PC-9 (cell line): ENCODE measurements at regions of chr12 and their contacts with region 1.

Region 1: GRCh38 chr12:110312581-110313360 is 31.7 kb downstream of the ATP2A2 start:
- DNase-seq: peak in 1 of 2 experiments; percentile 72
- H3K4me3 ChIP-seq: no peak overlapping the region
- H3K27ac ChIP-seq: peak overlapping the region; percentile 71
- H3K4me1 ChIP-seq: peaks cover 18% of the 10 kb centered on the region
- H3K27me3 ChIP-seq: no peaks in the 10 kb centered on the region
- CTCF ChIP-seq: no peak

Region 2: GRCh38 chr12:110224379-110225304 is 88.1 kb before region 1 on chr12:
- CTCF ChIA-PET with region 1: no interaction called
- POLR2A ChIA-PET with region 1: interaction called, 27 read pairs
- intact Hi-C with region 1: no loop called
- DNase-seq: peak in 1 of 2 experiments; percentile 64
- H3K4me3 ChIP-seq: peak overlapping the region; percentile 10; the same call in 1 of the 2 replicates
- H3K27ac ChIP-seq: peak overlapping the region; percentile 79
- H3K4me1 ChIP-seq: peaks cover 34% of the 10 kb centered on the region
- H3K27me3 ChIP-seq: no peaks in the 10 kb centered on the region
- CTCF ChIP-seq: peak; percentile 46

Region 3: DNA sequence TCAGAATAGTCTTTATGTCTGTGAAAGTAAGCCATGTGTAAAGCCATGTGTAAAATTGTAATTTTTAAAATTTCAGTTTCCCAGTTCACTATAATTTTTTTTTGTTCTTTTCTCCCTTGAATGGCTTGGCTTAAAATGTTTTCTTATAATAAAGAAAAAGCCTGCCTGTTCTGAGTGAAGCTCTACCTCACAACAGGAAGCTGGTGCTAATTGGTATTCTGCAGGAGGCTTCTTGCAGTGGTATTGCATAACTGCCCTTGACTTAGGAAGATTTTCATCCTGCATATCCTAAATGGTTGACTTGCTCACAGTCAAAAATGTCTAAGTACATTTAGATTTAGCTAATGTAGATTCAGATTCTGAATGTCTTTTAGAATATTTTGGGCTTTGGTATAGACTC is 17.8 kb after region 1 on chr12:
- CTCF ChIA-PET with region 1: no interaction called
- POLR2A ChIA-PET with region 1: interaction called, 11 read pairs
- intact Hi-C with region 1: no loop called
- DNase-seq: no peak
- H3K4me3 ChIP-seq: no peak overlapping the region
- H3K27ac ChIP-seq: peak overlapping the region; percentile 28
- H3K4me1 ChIP-seq: no peaks in the 10 kb centered on the region
- H3K27me3 ChIP-seq: no peaks in the 10 kb centered on the region
- CTCF ChIP-seq: no peak